Endothelial cell of umbilical vein (primary cell): ENCODE measurements at regions of chr10 and their contacts with region 1.

Region 1: GRCh38 chr10:48872234-48872633 is 67.4 kb downstream of the LRRC18 start:
- DNase-seq: no peak
- H3K4me3 ChIP-seq: no peak overlapping the region
- H3K27ac ChIP-seq: no peak overlapping the region
- H3K4me1 ChIP-seq: no peaks in the 10 kb centered on the region
- H3K27me3 ChIP-seq: peaks cover 2 to 3% of the 10 kb centered on the region in 2 experiments
- CTCF ChIP-seq: no peak
- POLR2A ChIP-seq: no peak

Region 2: GRCh38 chr10:48333856-48334255 is 538.4 kb before region 1 on chr10:
- CTCF ChIA-PET with region 1: no interaction called
- POLR2A ChIA-PET with region 1: no interaction called
- dilution Hi-C with region 1: no loop called
- intact Hi-C with region 1: loop called (anchors 5 kb)
- DNase-seq: no peak
- H3K4me3 ChIP-seq: no peak overlapping the region
- H3K27ac ChIP-seq: no peak overlapping the region
- H3K4me1 ChIP-seq: no peaks in the 10 kb centered on the region
- H3K27me3 ChIP-seq: no peaks in the 10 kb centered on the region
- CTCF ChIP-seq: no peak
- POLR2A ChIP-seq: no peak

Region 3: DNA sequence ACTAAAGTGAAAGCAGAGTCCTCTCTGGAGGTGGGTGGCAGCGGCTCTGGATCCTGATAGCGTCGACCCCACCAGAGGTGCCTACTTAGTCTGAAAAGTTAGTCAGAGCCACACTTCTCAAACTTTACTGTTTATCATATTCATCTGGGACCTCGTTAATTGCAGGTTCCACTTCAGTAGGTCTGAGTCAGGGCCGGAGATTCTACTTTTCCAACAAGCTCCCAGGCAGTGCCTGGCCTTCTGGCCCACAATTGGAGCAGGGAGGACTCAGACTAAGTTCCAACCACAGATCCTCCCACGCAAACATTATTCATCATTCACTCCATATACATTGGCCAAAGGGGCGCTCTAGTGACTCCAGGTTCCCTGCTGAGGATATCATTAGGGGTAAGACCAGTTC is 165.0 kb after region 1 on chr10:
- CTCF ChIA-PET with region 1: no interaction called
- POLR2A ChIA-PET with region 1: no interaction called
- dilution Hi-C with region 1: no loop called
- intact Hi-C with region 1: no loop called
- DNase-seq: no peak
- H3K4me3 ChIP-seq: no peak overlapping the region
- H3K27ac ChIP-seq: no peak overlapping the region
- H3K4me1 ChIP-seq: no peaks in the 10 kb centered on the region
- H3K27me3 ChIP-seq: peaks cover 0 to 2% of the 10 kb centered on the region in 2 experiments
- CTCF ChIP-seq: no peak
- POLR2A ChIP-seq: no peak